ENCODE measurements at regions of chr10 and their contacts with region 1.

Region 1: DNA sequence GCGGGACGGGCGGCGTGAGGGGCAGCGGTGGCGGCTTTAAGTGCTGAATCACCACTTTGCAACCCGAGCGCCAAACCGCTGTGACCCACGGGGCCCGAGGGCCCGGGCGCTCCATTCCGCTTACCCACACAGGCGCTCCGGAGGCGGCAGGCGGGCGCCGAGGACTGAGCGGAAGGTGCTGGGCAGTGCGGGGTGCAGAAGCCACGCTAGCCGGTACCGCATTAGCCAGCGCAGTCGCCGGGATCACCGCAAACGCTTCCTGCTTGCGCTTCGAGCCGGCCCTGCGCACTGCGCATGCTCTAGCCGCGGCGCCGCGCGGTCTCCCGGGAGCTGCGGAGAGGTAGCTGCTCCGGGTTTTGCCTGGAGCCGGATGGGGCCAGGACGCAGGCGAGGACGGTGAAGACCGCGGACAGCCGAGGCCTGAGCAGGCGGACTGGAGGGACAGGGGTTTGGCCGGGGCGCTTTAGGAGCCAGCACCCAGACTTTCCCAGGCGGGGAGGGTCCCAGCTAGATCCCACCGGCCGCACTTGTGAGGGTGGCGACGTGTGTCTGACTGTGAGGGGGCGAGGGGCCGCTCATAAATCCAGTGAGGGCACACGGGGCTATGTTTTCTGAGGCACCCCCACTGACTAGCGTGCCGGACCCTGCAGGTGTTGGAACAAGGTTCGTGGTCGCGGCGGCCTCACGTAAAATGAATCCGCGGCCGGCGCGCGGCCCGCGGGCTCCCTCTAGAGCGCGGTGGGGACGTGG is at the start of gene IDE:
- DNase-seq: no peak
- H3K4me3 ChIP-seq: peak within 1 kb of the TSS; percentile 81
- CTCF ChIP-seq: peak; percentile 92

Region 2: DNA sequence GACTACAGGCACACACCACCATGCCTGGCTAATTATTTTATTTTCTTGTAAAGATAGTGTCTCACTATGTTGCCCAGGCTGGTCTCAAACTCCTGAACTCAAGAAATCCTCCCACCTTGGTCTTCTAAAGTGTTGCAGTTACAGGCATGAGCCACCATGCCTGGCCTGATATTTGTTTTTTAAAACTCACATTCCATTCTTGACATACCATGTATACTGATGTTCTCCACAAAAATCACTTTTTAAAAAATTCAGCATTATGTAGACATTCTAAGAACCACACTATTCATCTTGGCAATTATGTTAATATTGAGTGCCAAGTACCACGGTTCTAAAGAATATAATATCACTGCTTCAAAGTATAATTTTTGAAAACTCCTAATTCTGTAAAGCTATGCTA is 43.6 kb before region 1 on chr10:
- CTCF ChIA-PET with region 1: interaction called, 11 read pairs
- POLR2A ChIA-PET with region 1: no interaction called
- DNase-seq: peak; percentile 21
- H3K4me3 ChIP-seq: no peak overlapping the region
- CTCF ChIP-seq: no peak

Region 3: DNA sequence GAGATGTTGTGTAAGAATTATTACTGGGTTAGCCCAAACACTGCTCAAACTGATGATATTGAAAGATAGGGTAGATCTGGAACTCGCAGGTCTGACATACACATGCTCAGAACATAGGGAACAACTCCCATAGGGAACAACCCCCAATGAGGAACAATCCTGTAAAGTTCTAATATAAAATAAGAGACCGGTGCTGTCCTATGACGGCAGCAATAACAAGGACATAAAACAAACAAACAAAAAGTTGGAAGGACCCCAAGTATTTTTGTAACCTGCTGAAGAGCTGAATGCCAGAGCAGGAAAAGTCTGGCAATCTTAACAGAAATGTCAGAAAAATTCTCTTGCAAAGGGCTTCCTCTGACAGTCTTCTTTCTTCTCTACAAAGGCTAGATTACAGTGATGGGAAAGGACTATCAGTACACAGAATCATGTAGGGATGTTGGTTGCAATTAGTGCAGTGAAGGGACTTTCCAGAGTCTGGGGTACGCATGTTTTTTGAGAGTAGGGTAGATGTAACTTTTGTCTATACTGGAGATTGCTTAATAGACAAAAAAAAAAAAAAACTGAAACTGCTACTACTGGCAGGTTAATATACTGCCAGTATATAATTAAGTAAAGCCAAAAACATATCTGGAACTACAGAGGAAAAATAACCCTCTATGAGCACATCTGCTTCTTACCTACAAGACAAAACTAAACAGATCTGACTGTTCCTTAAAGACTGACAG is 35.6 kb before region 1 on chr10:
- CTCF ChIA-PET with region 1: interaction called, 10 read pairs
- POLR2A ChIA-PET with region 1: no interaction called
- DNase-seq: no peak
- H3K4me3 ChIP-seq: no peak overlapping the region
- CTCF ChIP-seq: no peak

Region 4: DNA sequence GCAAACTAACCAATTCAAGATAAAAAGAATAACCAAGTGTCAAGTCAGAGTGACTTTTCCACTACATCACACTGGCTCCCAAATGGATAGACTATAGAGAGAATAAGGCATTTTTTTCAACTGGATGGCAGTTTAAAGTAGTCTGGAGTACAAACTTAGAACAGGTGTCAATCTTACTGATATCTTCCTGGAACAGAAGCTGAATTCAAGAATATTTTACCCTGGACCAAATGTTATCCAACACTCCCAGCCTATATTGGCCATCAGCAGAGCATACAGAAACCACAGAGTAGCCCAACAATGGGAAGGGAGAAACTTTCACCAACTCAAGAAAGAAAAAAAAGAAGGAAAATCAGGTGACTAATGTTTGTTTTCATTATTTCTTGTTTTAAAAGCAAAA is 11.5 kb before region 1 on chr10:
- CTCF ChIA-PET with region 1: interaction called, 32 read pairs
- POLR2A ChIA-PET with region 1: interaction called, 3 read pairs
- DNase-seq: no peak
- H3K4me3 ChIP-seq: no peak overlapping the region
- CTCF ChIP-seq: no peak

Region 5: GRCh38 chr10:92591550-92592022 is 17.6 kb after region 1 on chr10:
- CTCF ChIA-PET with region 1: interaction called, 19 read pairs
- POLR2A ChIA-PET with region 1: interaction called, 8 read pairs
- DNase-seq: no peak
- H3K4me3 ChIP-seq: peak overlapping the region; percentile 78
- CTCF ChIP-seq: no peak